ENCODE measurements at regions of chr15 and their contacts with region 1.

Region 1: GRCh38 chr15:80567721-80568157 is 127.4 kb upstream of the ABHD17C start:
- DNase-seq: peak; percentile 85
- H3K4me3 Mint-ChIP-seq: no peak overlapping the region
- H3K27ac Mint-ChIP-seq: no peak overlapping the region
- H3K4me1 Mint-ChIP-seq: peaks cover 28% of the 10 kb centered on the region
- H3K27me3 Mint-ChIP-seq: no peaks in the 10 kb centered on the region
- CTCF ChIP-seq: peak; percentile 74

Region 2: DNA sequence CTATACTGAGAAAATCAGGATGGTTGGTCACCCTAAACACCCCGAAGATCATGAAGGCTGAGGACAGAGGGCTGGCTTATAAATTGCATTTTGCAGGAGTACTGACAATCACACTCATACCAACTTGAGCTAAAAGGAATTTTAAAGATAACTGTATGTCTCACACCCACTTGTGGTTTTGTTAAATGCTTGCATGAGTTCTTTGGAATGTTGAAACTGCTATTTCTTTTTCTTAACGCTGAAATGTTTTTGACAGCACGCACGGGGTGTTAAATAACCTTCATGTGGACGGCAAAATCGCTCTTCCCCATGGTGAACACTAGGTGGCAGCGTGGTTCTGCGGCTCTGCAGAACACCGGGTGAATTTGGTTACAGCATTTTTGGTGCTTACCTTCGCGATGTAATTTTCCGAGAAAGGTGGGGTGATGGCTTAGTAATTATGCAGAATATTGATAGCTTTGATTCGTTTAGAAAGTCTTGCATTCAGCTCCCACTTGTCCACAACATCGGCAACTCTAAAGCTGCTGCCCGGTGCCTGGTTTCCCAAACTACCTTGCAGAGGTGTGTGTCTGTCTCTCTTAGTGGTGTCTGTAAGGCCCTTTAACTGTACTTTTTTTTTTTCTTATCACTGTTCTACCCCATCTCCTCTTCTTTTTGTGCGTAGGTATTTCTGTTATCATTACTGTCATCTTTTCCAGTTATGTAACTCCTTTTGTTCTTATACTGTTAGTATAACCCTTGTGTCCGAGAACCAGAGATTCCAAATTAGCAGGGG is 111.9 kb before region 1 on chr15:
- CTCF ChIA-PET with region 1: interaction called, 43 read pairs
- POLR2A ChIA-PET with region 1: interaction called, 3 read pairs
- intact Hi-C with region 1: loop called (anchors 1 kb)
- DNase-seq: peak; percentile 77
- H3K4me3 Mint-ChIP-seq: no peak overlapping the region
- H3K27ac Mint-ChIP-seq: no peak overlapping the region
- H3K4me1 Mint-ChIP-seq: peaks cover 13% of the 10 kb centered on the region
- H3K27me3 Mint-ChIP-seq: no peaks in the 10 kb centered on the region
- CTCF ChIP-seq: peak; percentile 77

Region 3: DNA sequence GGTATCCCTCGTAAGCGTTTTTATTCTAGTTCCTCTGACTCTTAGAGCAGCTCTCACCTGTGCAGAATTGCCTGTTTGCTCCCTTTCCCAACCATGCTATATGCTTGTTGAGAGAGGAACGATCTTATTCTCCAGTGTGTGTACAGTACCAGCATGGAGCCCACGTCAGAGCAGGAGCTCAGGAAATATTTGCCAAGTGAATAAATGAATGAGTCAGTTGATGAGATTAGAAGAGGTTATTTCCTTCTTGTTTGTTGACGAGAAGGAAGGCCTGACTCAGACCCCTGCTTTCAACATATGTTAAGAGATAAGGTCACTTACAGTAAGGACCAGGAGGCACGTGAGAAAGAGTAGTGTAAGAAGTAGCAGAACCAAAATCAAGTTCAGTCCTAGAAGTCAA is 21.1 kb after region 1 on chr15:
- CTCF ChIA-PET with region 1: interaction called, 23 read pairs
- POLR2A ChIA-PET with region 1: interaction called, 9 read pairs
- intact Hi-C with region 1: no loop called
- DNase-seq: peak; percentile 79
- H3K4me3 Mint-ChIP-seq: peak overlapping the region; percentile 1
- H3K27ac Mint-ChIP-seq: peak overlapping the region; percentile 37
- H3K4me1 Mint-ChIP-seq: peaks cover 37% of the 10 kb centered on the region
- H3K27me3 Mint-ChIP-seq: no peaks in the 10 kb centered on the region
- CTCF ChIP-seq: no peak

Region 4: GRCh38 chr15:80619680-80620079 is 51.9 kb after region 1 on chr15:
- CTCF ChIA-PET with region 1: interaction called, 34 read pairs
- POLR2A ChIA-PET with region 1: interaction called, 4 read pairs
- intact Hi-C with region 1: no loop called
- DNase-seq: no peak
- H3K4me3 Mint-ChIP-seq: no peak overlapping the region
- H3K27ac Mint-ChIP-seq: no peak overlapping the region
- H3K4me1 Mint-ChIP-seq: peaks cover 24% of the 10 kb centered on the region
- H3K27me3 Mint-ChIP-seq: no peaks in the 10 kb centered on the region
- CTCF ChIP-seq: no peak

Region 5: DNA sequence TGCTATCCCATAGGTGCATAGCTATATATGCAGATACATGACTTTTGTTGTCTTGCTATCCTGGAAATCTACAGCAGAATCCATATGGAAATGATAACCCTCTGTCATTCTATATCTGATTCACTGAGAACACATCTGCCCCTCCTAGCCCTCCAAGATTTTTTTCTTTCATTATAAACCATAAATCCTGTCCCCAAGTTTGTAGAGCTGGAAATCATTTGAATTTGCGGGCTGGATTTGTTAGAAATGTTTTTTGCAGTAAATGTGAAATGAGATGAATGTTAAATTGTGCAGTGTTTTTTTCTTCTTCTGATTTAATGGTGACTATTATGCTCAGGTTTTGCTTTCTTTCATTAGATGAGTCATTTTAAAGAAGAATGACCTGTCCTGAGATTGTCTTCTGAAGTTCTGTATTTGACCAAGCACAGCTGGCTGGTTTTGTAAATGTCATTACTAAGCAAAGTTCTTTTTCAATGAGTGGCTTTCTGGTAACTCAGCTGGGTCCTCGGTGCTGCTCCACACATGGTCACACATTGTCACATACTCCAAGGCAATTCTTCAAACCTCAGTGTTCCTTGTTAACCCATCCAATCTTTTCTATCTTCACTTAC is 102.0 kb after region 1 on chr15:
- CTCF ChIA-PET with region 1: interaction called, 10 read pairs
- POLR2A ChIA-PET with region 1: no interaction called
- intact Hi-C with region 1: no loop called
- DNase-seq: no peak
- H3K4me3 Mint-ChIP-seq: no peak overlapping the region
- H3K27ac Mint-ChIP-seq: no peak overlapping the region
- H3K4me1 Mint-ChIP-seq: peaks cover 17% of the 10 kb centered on the region
- H3K27me3 Mint-ChIP-seq: no peaks in the 10 kb centered on the region
- CTCF ChIP-seq: no peak

Region 6: GRCh38 chr15:80710635-80711554 is 143.2 kb after region 1 on chr15:
- CTCF ChIA-PET with region 1: interaction called, 13 read pairs
- POLR2A ChIA-PET with region 1: no interaction called
- intact Hi-C with region 1: no loop called
- DNase-seq: no peak
- H3K4me3 Mint-ChIP-seq: no peak overlapping the region
- H3K27ac Mint-ChIP-seq: no peak overlapping the region
- H3K4me1 Mint-ChIP-seq: peaks cover 20% of the 10 kb centered on the region
- H3K27me3 Mint-ChIP-seq: no peaks in the 10 kb centered on the region
- CTCF ChIP-seq: no peak

Region 7: GRCh38 chr15:80970018-80970658 is 402.4 kb after region 1 on chr15:
- CTCF ChIA-PET with region 1: interaction called, 70 read pairs
- POLR2A ChIA-PET with region 1: interaction called, 5 read pairs
- intact Hi-C with region 1: loop called (anchors 1 kb)
- DNase-seq: peak; percentile 71
- H3K4me3 Mint-ChIP-seq: no peak overlapping the region
- H3K27ac Mint-ChIP-seq: no peak overlapping the region
- H3K4me1 Mint-ChIP-seq: no peaks in the 10 kb centered on the region
- H3K27me3 Mint-ChIP-seq: no peaks in the 10 kb centered on the region
- CTCF ChIP-seq: peak; percentile 79

Measured in MCF 10A (cell line).